CD4-positive, alpha-beta T cell (primary cell): ENCODE measurements at regions of chr9 and their contacts with region 1.

Region 1: DNA sequence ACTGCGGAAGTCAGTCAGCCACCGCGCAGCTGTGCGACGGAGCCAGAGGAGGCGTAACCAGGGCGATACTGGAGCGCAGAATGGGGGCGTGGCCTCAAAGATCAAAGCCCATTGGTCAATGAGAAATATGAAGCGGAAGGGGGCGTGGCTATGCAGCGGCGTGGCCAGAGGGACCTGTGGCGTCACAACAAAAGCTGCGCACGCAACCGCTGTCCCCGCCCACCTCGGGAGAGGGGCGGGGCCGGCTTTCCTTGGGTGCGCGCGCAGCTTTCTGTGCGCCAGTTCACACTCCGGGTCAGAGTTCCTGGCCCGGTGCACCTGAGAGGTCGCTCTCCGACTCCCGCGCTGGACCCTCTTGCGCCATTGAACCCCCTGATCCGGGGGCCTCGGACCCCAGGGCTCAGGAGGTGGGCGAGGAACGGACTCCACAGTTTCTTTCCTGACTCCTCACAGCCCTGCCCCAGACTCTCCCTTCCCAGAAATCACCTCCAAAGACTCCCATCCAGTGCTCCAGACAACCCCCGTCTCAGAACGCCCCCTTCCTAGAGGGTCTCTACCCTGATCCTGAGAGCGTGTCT is at the starts of genes GOLGA2 and SWI5:
- DNase-seq: peak; percentile 99 to 100 (median 100)
- ATAC-seq: peak; percentile 96
- H3K4me3 ChIP-seq: peak within 1 kb of the TSS; percentile 98
- H3K4me3 Mint-ChIP-seq: peak within 1 kb of the TSS; percentile 98
- H3K27ac ChIP-seq: peak within 1 kb of the TSS; percentile 70 to 72
- H3K27ac Mint-ChIP-seq: peak within 1 kb of the TSS; percentile 88
- H3K4me1 ChIP-seq: peaks cover 31% of the 10 kb centered on the region
- H3K4me1 Mint-ChIP-seq: peaks cover 36% of the 10 kb centered on the region
- H3K27me3 ChIP-seq: no peaks in the 10 kb centered on the region
- H3K27me3 Mint-ChIP-seq: no peaks in the 10 kb centered on the region
- CTCF ChIP-seq: no peak
- total RNA-seq, gene GOLGA2: 44.3 to 48.3 TPM
- total RNA-seq, gene SWI5: 3.0 to 4.1 TPM

Region 2: GRCh38 chr9:128203024-128203706 is 72.9 kb before region 1 on chr9 and contains the start of gene DNM1:
- CTCF ChIA-PET with region 1: no interaction called
- POLR2A ChIA-PET with region 1: no interaction called
- intact Hi-C with region 1: loop called in 1 of 2 experiments (anchors 1 kb)
- DNase-seq: peak; percentile 41 to 91 (median 65)
- ATAC-seq: peak; percentile 98
- H3K4me3 ChIP-seq: peak within 1 kb of the TSS; percentile 55
- H3K4me3 Mint-ChIP-seq: peak within 1 kb of the TSS; percentile 83
- H3K27ac ChIP-seq: no peak within 1 kb of the TSS
- H3K27ac Mint-ChIP-seq: no peak within 1 kb of the TSS
- H3K4me1 ChIP-seq: peaks cover 17% of the 10 kb centered on the region
- H3K4me1 Mint-ChIP-seq: peaks cover 5% of the 10 kb centered on the region
- H3K27me3 ChIP-seq: peaks cover 11 to 17% of the 10 kb centered on the region in 2 experiments
- H3K27me3 Mint-ChIP-seq: peaks cover 9% of the 10 kb centered on the region
- CTCF ChIP-seq: peak; percentile 72
- total RNA-seq, gene DNM1: 1.8 to 2.5 TPM

Region 3: DNA sequence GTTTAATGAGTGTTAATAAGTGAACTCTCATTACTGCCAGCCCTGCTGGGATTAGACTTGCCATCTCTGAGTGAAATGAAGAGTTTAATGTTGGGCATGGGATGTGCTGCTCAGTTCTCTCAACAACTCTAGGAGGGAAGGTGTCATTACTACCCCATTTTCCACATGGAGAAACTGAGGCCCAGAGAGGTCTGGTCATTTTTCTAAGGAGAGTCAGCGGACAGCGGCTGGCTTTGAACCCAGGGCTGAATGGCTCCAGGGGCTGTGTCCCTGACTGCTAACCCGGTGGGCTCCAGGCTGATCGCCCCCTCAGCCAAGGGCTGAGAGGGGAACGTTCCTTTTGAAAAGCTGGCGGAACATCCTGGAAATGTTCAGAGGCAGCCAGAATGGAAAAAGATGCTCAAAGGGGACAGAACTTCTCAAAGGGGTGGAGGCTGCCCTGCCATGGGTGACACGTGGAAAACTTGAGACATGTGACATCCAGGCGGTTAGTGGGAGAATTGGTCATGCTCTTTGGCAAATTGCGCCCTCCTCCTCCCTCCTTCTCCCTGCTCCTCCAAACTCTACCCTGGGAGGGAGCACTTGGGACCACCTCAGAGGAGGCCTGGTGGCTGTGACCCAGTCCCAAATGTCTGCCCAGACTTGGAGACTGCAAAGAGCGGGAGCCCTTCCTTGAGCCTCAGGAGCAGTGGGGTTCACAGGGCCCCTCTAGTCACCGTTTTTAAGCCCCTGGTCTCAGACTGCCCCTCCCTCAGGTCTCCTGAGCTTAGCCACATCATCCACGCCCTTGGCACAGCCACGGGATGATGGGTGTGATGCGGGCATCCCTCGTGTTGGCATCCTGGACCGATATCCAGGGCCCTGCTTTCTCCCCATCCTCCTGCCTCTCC is 44.2 kb before region 1 on chr9:
- CTCF ChIA-PET with region 1: no interaction called
- POLR2A ChIA-PET with region 1: no interaction called
- intact Hi-C with region 1: no loop called
- DNase-seq: no peak
- ATAC-seq: no peak
- H3K4me3 ChIP-seq: no peak overlapping the region
- H3K4me3 Mint-ChIP-seq: no peak overlapping the region
- H3K27ac ChIP-seq: no peak overlapping the region
- H3K27ac Mint-ChIP-seq: no peak overlapping the region
- H3K4me1 ChIP-seq: no peaks in the 10 kb centered on the region
- H3K4me1 Mint-ChIP-seq: no peaks in the 10 kb centered on the region
- H3K27me3 ChIP-seq: no peaks in the 10 kb centered on the region
- H3K27me3 Mint-ChIP-seq: no peaks in the 10 kb centered on the region
- CTCF ChIP-seq: no peak

Region 4: DNA sequence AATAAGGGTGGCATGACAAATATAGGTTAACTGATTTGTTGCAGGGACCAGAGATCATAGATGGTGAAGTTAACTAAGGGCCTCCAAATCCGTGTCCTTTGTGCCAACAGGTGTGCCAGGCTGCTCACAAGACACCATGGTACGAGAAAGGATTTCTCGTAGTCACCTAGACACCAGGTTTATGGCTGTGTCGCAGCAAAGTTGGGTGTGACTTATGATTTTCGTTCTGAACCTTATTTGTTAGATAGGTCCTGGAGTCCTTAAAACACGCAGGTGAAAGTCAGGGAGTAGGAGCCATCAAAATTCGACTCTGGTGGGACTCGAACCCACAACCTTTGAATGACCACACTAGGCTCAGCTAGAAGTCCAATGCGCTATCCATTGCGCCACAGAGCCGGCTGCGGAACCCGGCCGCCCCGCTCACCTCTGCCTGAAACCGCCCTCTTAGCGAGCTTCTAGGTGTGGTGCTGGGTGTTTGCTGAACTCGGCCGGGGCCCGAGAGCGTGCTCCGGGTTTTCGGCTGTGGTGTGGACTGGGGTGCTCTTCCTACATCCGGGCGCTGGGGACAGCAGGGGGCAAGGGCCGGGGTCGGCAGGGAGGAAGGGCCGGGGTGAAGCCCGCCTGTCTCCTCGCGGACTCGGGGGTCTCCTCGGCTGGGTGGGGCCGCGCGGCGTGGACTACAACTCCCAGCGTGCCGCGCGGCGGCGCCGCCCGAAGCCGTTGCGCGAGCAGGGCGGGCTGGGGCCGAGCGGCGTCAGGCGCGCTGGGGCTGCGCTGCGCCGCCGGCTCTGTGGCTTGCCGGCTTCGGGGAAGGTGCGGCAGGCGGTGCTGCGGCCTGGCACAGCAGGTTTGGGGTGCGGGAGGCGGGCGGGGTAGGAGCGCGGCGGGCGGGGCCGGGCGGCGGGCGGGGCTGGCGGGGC is 63.9 kb after region 1 on chr9 and contains the start of gene SLC27A4:
- CTCF ChIA-PET with region 1: interaction called, 3 read pairs
- POLR2A ChIA-PET with region 1: interaction called, 4 read pairs
- intact Hi-C with region 1: loop called in 1 of 2 experiments (anchors 1 kb)
- DNase-seq: peak; percentile 61 to 94 (median 76)
- ATAC-seq: peak; percentile 92
- H3K4me3 ChIP-seq: peak within 1 kb of the TSS; percentile 75
- H3K4me3 Mint-ChIP-seq: peak within 1 kb of the TSS; percentile 98
- H3K27ac ChIP-seq: peak within 1 kb of the TSS; percentile 41 to 46
- H3K27ac Mint-ChIP-seq: peak within 1 kb of the TSS; percentile 81
- H3K4me1 ChIP-seq: peaks cover 21% of the 10 kb centered on the region
- H3K4me1 Mint-ChIP-seq: peaks cover 7% of the 10 kb centered on the region
- H3K27me3 ChIP-seq: no peaks in the 10 kb centered on the region
- H3K27me3 Mint-ChIP-seq: no peaks in the 10 kb centered on the region
- CTCF ChIP-seq: no peak
- total RNA-seq, gene SLC27A4: 2.2 to 3.1 TPM

Region 5: GRCh38 chr9:128455849-128456612 is 179.9 kb after region 1 on chr9 and contains the start of gene ODF2:
- CTCF ChIA-PET with region 1: no interaction called
- POLR2A ChIA-PET with region 1: no interaction called
- intact Hi-C with region 1: loop called in 1 of 2 experiments (anchors 1 kb)
- DNase-seq: peak; percentile 97 to 99 (median 98)
- ATAC-seq: peak; percentile 90
- H3K4me3 ChIP-seq: peak within 1 kb of the TSS; percentile 91
- H3K4me3 Mint-ChIP-seq: peak within 1 kb of the TSS; percentile 91
- H3K27ac ChIP-seq: peak within 1 kb of the TSS; percentile 83 to 86
- H3K27ac Mint-ChIP-seq: peak within 1 kb of the TSS; percentile 89
- H3K4me1 ChIP-seq: peaks cover 19% of the 10 kb centered on the region
- H3K4me1 Mint-ChIP-seq: peaks cover 11% of the 10 kb centered on the region
- H3K27me3 ChIP-seq: no peaks in the 10 kb centered on the region
- H3K27me3 Mint-ChIP-seq: no peaks in the 10 kb centered on the region
- CTCF ChIP-seq: no peak
- total RNA-seq, gene ODF2: 18.3 to 21.3 TPM

Region 6: GRCh38 chr9:128764361-128764760 is 488.3 kb after region 1 on chr9:
- CTCF ChIA-PET with region 1: no interaction called
- POLR2A ChIA-PET with region 1: no interaction called
- intact Hi-C with region 1: no loop called
- DNase-seq: no peak
- ATAC-seq: no peak
- H3K4me3 ChIP-seq: no peak overlapping the region
- H3K4me3 Mint-ChIP-seq: no peak overlapping the region
- H3K27ac ChIP-seq: no peak overlapping the region
- H3K27ac Mint-ChIP-seq: no peak overlapping the region
- H3K4me1 ChIP-seq: peaks cover 10% of the 10 kb centered on the region
- H3K4me1 Mint-ChIP-seq: peaks cover 53% of the 10 kb centered on the region
- H3K27me3 ChIP-seq: no peaks in the 10 kb centered on the region
- H3K27me3 Mint-ChIP-seq: no peaks in the 10 kb centered on the region
- CTCF ChIP-seq: no peak